ENCODE measurements at regions of chr5 and their contacts with region 1.

Region 1: DNA sequence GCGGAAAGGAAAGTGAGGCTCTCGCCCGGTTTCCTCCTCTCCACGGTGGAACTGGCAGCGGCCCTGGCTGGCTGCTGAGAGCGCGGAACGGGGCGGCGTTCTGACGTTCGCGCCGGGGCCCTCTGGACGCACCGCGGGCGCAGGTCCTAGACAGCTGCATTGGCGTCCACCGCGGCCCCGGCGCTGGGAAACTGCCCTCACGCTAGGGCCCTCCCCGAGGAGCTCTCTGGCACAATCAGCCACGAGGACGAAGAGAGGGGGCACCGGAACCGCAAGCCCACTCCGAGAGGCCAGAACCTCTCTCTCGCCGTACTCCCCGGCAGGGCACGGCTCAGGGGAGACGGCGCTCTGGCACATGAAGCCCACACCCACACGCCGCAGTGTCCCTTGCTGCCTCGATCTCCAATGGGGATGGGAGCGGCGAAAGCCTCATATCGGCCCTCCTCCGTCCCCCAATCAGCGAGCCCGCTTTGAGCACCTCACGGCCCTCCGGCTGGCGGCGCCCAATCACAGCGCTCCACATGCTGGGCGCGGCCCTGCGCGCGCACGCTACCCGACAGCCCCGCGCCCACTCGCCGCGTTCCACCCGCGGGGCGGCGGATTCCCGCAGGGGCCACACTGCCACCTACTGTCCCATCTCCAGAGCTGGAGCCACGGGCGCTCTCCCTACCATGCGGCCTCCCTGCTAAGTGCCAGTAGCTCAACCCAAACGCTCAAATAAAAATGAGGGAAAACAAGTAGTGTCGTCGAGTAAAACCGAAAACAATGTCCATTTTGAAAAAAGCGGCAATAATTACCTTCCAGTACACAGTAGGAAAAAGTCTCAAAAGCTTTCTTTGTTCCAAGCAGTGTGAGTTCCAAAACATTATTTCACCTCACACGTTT is 11.8 kb downstream of the MRPS27 start:
- DNase-seq: peak; percentile 96
- H3K4me3 Mint-ChIP-seq: peak overlapping the region; percentile 81
- H3K27ac Mint-ChIP-seq: peak overlapping the region; percentile 91
- H3K4me1 Mint-ChIP-seq: peaks cover 30% of the 10 kb centered on the region
- H3K27me3 Mint-ChIP-seq: no peaks in the 10 kb centered on the region

Region 2: DNA sequence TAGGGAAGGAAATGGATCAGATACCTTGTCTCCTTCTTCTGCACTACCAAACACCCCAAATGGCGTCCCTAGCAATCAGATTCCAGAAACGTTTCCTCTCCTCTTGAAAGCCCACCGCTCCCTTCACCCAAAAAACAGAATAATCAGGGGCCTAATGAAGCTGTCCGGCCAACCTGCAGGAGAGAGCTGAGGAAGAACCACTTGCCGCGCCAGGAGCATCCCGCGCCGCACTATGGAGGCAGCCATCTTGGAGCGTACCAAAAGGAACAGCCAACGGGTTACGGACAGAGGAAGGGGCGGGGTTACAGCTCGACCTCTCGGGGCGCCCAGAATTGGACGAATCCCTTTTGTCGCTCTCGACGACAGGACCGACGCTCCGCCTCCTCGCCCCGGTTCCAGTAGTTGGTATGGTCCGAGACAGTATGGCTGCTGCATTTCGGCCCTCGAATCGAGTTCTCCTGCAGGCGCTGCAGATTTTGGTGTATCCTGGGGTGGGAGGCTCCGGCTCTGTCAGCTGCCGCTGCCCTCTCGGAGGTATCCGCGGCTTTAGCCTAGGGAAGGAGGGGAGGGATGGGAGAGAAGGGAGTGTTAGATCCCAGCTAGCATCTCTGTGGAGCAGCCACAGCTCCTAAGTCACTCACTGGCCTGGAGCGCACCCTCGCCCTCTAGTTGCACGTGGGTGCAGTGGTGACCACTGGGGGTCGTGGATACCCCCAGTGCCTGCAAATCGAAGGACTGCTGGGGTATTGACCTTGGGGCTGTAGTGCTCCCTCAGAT is 12.0 kb after region 1 on chr5 and contains the starts of genes MRPS27 and PTCD2:
- CTCF ChIA-PET with region 1: interaction called, 38 read pairs
- POLR2A ChIA-PET with region 1: interaction called, 123 read pairs
- DNase-seq: peak; percentile 95
- H3K4me3 Mint-ChIP-seq: peak within 1 kb of the TSS; percentile 94
- H3K27ac Mint-ChIP-seq: peak within 1 kb of the TSS; percentile 76
- H3K4me1 Mint-ChIP-seq: peaks cover 49% of the 10 kb centered on the region
- H3K27me3 Mint-ChIP-seq: no peaks in the 10 kb centered on the region
- total RNA-seq, gene MRPS27: 34.5 to 41.1 TPM
- total RNA-seq, gene PTCD2: 7.5 to 8.4 TPM

Measured in activated CD4-positive, alpha-beta memory T cell treated with anti-CD3 and anti-CD28 coated beads, Interleukin-2, amount 10 ng/mL, durations not matched to agents 7 days and 5 days (primary cell).